CD4-positive, alpha-beta T cell (primary cell): ENCODE measurements at regions of chr4 and their contacts with region 1.

Region 1: GRCh38 chr4:108135549-108136209 is 33.1 kb downstream of the LEF1 start:
- DNase-seq: peak in 2 of 14 experiments; percentile 32
- ATAC-seq: peak; percentile 13
- H3K4me3 ChIP-seq: peak overlapping the region; percentile 20
- H3K4me3 Mint-ChIP-seq: peak overlapping the region; percentile 77
- H3K27ac ChIP-seq: peak overlapping the region; percentile 29 to 61
- H3K27ac Mint-ChIP-seq: peak overlapping the region; percentile 98
- H3K4me1 ChIP-seq: peaks cover 50% of the 10 kb centered on the region
- H3K4me1 Mint-ChIP-seq: peaks cover 92% of the 10 kb centered on the region
- H3K27me3 ChIP-seq: no peaks in the 10 kb centered on the region
- H3K27me3 Mint-ChIP-seq: no peaks in the 10 kb centered on the region
- CTCF ChIP-seq: no peak

Region 2: DNA sequence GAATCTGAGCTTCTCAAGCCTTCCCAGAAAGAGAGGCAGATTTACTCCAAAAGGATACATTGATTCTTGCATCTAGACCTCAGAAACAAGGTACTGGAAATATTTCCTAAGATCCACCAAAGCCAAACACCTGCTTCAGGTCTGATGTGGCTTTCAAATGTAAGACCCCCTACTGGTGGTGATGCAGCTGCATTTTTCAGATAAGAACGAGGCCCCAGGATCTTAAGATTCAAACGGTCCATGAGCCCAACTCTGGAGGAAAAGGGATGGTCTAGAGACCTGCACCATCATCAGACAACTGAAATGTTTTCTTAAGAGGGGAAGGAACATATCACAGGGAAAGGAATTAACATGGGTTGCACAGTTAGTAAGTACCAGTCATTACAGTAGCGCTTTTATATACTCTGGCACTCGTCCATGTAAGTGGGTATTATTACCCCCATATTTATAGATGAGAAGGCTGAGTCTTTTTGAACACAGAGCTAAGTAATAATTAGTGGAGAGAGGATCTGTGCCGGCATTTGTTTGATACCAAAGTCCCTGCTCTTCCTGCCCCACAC is 40.7 kb before region 1 on chr4:
- CTCF ChIA-PET with region 1: no interaction called
- POLR2A ChIA-PET with region 1: interaction called, 3 read pairs
- intact Hi-C with region 1: loop called in 1 of 2 experiments (anchors 5 kb)
- DNase-seq: no peak
- ATAC-seq: peak; percentile 44
- H3K4me3 ChIP-seq: no peak overlapping the region
- H3K4me3 Mint-ChIP-seq: peak overlapping the region; percentile 67
- H3K27ac ChIP-seq: no peak overlapping the region
- H3K27ac Mint-ChIP-seq: peak overlapping the region; percentile 92
- H3K4me1 ChIP-seq: peaks cover 32% of the 10 kb centered on the region
- H3K4me1 Mint-ChIP-seq: peaks cover 94% of the 10 kb centered on the region
- H3K27me3 ChIP-seq: no peaks in the 10 kb centered on the region
- H3K27me3 Mint-ChIP-seq: no peaks in the 10 kb centered on the region
- CTCF ChIP-seq: no peak